ENCODE measurements at regions of chr17 and their contacts with region 1.

Region 1: DNA sequence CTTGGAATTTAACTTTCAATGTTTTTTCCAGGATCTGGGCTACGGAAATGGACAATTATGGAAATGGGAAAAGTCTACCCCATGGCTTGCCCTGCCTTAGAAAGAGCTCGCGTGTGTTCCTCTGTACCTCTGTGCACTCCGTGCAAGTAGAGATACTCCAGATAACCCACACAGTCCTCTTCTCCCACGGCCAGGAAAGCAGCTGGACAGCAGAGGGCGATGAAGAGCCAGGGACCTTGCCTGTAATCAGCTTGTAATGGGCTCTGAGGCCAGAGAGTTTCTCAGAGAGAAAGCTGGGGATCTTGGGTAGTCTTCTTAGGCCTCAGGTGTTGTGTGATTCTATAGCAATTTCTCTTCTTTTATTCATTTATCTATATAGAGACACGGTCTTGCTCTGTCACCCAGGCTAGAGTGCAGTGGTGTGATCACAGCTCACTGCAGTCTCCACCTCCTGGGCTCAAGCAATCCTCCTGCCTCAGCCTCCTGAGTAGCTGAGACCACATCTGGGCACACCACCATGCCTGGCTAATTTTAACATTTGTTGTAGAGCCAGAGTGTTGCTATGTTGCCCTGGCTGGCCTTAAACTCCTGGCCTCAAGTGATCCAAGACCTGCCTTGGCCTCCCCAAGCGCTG is 2.4 kb upstream of the SOCS7 start:
- DNase-seq: peak; percentile 90
- H3K4me3 Mint-ChIP-seq: no peak overlapping the region
- H3K27ac Mint-ChIP-seq: no peak overlapping the region
- H3K4me1 Mint-ChIP-seq: peaks cover 28% of the 10 kb centered on the region
- H3K27me3 Mint-ChIP-seq: no peaks in the 10 kb centered on the region

Region 2: DNA sequence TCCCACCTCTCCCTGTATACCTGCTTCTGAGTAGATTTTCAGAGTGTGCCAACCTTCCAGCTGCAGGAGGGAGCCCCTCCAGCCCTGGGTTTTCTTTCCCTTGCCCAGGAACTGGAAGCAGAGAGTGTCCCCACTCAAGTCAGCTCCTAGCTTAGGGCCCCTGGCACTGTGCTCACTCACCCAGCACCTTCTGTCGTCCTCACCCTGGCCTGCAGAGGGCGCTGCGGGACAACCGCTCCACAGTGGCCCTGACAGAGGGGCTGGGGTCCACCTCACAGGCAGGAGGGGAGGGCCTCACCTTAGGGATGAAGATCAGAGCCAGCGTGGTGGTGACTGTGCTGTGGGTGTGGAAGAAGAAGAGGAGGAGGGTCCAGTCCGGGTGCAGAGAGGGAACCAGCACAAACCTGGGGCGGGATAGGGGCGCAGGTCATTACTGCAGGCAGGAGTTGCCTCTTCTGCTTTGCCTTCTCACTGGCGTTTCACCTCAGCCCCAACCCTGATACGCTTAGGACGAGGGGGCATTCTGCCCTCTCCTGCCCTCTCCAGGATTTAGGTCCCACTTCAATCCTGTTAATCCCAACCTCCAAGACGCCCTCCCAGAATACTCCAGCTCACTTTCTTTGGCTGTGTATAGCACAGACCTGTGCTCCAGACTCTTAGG is 15.4 kb before region 1 on chr17:
- CTCF ChIA-PET with region 1: interaction called, 34 read pairs
- POLR2A ChIA-PET with region 1: no interaction called
- DNase-seq: peak; percentile 57
- H3K4me3 Mint-ChIP-seq: no peak overlapping the region
- H3K27ac Mint-ChIP-seq: no peak overlapping the region
- H3K4me1 Mint-ChIP-seq: no peaks in the 10 kb centered on the region
- H3K27me3 Mint-ChIP-seq: peaks cover 2% of the 10 kb centered on the region

Region 3: DNA sequence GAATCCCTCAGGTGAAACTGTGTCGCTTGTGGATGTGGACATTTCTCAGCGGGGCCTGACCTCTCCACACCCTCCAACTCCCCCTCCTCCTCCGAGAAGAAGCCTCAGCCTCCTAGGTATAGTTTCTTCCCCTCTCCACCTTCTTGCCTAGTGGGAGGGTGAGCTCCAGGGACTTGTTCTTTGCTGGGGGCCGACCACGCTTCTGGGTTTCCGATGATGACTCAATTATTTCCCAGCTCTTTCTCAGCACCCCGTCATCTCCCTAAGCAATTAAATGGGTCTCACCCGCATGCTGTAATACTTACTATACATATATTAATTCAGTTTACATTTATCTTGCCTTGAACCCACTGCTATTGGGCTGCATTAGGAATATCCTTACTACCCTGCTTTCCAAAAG is 15.5 kb after region 1 on chr17:
- CTCF ChIA-PET with region 1: interaction called, 10 read pairs
- POLR2A ChIA-PET with region 1: interaction called, 3 read pairs
- DNase-seq: no peak
- H3K4me3 Mint-ChIP-seq: no peak overlapping the region
- H3K27ac Mint-ChIP-seq: no peak overlapping the region
- H3K4me1 Mint-ChIP-seq: peaks cover 3% of the 10 kb centered on the region
- H3K27me3 Mint-ChIP-seq: no peaks in the 10 kb centered on the region

Region 4: DNA sequence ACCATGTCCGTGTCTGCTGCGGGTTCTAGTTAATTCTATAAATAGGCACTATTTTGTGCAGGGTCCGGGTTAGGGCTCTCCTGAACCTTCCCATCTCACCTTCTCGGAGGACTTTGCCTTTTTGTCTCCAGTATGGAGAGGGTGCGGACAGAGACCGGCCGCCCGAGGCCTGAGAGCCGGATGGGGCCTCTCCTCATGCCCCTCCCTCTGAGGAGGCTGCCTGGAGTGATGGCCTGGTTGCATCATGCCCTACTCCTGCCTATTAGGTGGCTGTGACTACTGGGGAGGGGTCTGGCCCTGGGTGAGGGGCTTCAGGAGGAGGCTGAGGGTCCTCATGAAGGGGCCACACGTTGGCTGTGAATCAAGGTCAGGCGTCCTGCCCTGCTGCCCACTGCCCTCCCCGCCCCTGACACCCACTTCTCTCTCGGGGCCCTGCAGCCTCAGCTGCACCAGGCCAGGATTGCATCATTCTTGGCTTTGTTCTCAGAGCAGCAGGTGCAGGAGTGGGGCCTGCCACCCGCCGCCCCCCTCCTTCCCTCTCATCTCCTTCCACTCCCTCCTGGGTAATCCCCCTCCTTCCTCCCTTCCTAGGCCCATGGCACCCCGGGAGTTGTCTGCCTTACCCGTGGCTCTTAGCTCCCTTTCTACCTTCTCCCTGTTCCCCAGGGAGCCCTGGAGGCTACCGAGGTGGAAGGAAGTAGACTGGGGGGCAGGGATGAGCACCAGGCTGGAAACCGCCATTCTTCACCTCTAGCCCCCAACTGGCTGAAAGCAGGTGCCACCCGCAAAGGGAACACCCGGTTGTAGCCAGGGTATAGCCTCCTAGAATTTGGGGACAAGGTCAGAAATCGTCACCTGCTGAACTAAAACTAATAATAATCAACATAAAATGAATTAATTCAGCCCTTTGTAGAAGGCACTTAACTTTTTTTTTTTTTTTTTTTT is 66.3 kb after region 1 on chr17:
- CTCF ChIA-PET with region 1: interaction called, 20 read pairs
- POLR2A ChIA-PET with region 1: no interaction called
- DNase-seq: no peak
- H3K4me3 Mint-ChIP-seq: no peak overlapping the region
- H3K27ac Mint-ChIP-seq: peak overlapping the region; percentile 41
- H3K4me1 Mint-ChIP-seq: peaks cover 14% of the 10 kb centered on the region
- H3K27me3 Mint-ChIP-seq: peaks cover 27% of the 10 kb centered on the region

Region 5: GRCh38 chr17:38424297-38424972 is 75.2 kb after region 1 on chr17:
- CTCF ChIA-PET with region 1: interaction called, 12 read pairs
- POLR2A ChIA-PET with region 1: no interaction called
- DNase-seq: no peak
- H3K4me3 Mint-ChIP-seq: no peak overlapping the region
- H3K27ac Mint-ChIP-seq: no peak overlapping the region
- H3K4me1 Mint-ChIP-seq: peaks cover 7% of the 10 kb centered on the region
- H3K27me3 Mint-ChIP-seq: peaks cover 38% of the 10 kb centered on the region